ENCODE measurements at regions of chr22 and their contacts with region 1.

Region 1: DNA sequence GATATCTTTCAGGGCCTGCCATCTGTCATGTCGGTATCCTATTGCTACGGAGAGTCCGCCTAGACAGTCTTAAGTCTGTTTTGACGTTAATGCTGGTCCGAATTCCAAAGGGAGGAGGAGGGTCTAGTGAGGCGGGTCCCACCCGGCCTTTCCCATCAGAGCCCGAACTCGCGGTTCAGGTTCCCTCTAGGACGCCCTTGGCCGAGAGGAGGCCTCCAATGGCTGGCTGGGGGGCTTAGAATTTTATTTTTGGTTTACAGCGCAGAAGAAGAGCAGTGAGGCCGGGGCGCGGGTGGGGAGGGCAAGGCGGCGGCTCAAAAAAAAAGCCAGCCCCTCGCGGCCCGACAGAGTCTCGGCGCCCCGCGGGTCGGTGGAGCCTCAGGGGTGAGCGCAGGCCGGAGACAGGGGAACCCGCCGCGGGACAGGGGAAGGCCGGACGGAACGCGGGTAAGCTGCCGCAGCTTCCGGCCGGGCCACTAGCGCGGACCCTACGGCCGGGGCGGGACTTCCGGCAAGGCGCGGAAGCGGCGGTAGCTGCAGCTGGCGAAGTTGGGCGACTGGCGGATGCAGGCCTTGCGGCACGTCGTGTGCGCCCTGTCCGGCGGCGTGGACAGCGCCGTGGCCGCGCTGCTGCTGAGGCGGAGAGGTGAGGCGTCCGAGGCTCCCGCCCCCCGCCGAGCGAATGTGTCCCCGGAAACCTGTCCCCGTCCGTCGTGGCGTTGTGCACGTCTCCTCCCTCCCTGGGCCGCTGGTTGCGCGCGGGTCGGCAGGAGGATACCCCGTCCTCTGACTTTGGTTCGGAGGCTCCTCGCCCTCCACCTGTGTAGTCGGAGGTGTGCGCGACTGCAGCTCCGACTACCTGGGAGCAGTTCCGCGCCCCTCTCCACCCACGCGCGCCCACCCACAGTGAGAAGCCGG is at the start of gene TRMU:
- DNase-seq: peak; percentile 85
- total RNA-seq, gene TRMU: 55.4 and 57.7 TPM in 2 replicates

Region 2: DNA sequence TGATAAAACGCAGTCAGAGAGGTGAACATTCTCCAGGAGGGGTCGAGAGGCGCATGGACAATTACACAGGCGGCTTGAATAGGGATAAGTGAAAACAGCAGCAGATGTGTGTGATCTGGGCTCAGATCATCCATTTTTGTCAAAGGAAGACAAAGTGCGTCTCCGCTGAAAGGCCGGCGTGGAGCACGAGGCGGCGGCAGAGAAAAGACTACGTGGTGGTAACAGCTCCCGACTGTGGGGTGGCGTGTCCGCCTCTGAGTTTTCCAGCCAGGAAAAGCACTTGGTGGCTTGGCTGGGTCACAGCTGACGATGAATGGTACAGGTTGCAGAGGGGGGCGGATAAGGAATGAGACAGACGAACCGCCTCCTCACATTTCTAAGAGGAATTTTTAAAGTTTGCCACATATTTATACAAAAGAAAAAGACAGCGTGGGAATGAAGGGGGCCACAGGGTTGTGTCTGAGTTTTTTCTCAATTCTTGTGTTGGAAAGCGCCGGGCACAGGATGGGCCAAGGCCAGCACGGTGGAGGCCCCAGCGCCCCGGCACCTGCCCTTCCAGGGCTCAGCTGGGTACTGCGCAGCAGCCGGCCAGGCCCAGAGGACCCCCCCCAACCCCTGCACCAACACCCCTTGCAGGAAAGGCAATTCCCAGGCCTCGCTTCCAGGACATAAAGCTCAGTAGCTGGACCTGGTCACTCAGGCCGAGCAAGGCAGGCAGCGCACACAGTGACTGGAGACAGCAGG is 80.5 kb after region 1 on chr22:
- in situ Hi-C with region 1: loop called (anchors 10 kb)
- DNase-seq: no peak

Region 3: DNA sequence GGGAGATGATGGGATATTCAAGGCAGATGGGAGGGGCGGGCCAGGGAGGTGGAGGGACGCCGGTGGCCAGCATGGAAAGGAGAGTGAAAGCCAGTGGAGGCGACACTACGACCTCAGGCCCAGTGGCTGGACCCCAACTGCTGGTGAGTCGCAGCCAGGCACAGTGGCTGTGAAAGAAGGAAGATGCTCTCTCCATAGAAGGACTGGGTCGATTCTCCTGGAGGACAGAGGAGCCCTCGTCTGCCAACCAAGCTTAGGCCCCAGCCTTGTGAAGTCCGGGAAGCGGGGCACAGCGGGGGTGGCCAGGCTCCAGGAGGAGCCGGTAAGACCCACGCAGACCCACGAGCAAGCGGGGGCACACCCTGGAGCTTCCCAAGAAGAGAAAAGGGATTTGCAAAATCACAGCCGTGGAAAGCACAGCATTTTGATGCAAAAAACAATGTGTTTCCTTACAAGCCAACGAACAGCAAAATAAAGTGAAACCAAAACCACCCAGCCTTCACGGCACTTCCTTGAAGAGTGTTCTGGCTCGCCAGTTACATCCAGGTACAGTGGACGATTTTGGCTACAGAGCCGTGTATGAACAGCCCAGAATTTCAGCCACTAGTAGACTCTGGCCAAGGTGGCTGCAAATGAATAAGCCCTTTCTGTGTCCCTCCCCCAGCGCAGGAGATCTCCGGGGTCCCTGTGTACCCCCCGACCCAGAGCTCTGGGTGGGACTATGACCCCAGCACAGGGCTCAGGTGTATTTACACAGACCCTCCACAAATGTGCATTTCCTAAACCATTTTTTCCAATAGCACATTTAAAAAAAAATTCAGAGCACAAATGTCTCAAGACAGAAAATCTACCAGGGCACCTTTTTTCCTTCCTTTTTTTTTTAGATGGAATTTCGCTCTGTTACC is 97.0 kb after region 1 on chr22:
- in situ Hi-C with region 1: no loop called
- DNase-seq: no peak